ENCODE measurements at regions of chr19 and their contacts with region 1.

Region 1: GRCh38 chr19:55605207-55605636 is 225 bp upstream of the ZNF865 start:
- DNase-seq: peak; percentile 97
- ATAC-seq: peak; percentile 76
- H3K4me3 ChIP-seq: peak overlapping the region; percentile 43 to 84 (median 70)
- H3K4me3 Mint-ChIP-seq: peak overlapping the region; percentile 86
- H3K27ac ChIP-seq: peak overlapping the region; percentile 74 to 85
- H3K27ac Mint-ChIP-seq: peak overlapping the region; percentile 94
- H3K4me1 ChIP-seq: peaks cover 17 to 35% of the 10 kb centered on the region in 2 donors
- H3K4me1 Mint-ChIP-seq: peaks cover 56% of the 10 kb centered on the region
- H3K27me3 ChIP-seq: no peaks in the 10 kb centered on the region
- H3K27me3 Mint-ChIP-seq: no peaks in the 10 kb centered on the region
- CTCF ChIP-seq: no peak

Region 2: DNA sequence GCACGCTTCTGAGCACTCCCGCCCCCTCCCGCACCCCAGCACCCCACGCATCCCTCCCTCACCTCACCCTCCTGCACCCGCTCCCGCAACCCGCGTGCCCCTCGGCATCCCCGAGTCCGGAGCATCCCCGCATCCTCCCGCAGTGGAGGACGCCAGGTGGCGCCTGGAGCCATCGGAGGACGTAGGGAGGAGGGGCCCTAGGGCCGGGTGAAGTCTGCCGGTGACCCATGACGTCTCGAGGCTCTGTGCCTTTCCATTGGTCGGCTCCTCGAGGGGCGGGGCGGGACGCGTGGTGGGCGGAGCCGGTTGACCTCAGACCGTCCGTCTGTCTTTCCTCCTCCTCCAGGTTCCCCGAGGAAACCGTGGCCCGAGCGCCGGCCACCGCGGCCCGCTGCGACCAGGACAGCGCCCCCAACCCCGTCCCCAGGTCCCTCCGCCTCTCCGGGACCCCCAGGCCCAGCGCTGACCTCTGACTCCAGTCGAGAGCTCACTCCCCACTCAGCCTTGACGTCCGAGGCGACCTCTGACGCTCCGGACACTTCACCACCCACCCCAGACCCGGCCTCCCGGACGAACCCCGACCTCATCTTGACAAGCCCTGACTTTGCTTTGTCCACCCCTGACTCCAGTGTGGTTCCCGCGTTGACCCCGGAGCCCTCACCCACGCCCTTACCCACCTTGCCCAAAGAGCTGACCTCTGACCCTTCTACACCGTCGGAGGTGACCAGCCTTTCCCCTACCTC is 88.2 kb before region 1 on chr19:
- CTCF ChIA-PET with region 1: interaction called, 46 read pairs
- POLR2A ChIA-PET with region 1: interaction called, 3 read pairs
- intact Hi-C with region 1: no loop called
- DNase-seq: peak; percentile 94
- ATAC-seq: peak; percentile 100
- H3K4me3 ChIP-seq: peak overlapping the region in 4 of 5 experiments; percentile 53 to 60 (median 58)
- H3K4me3 Mint-ChIP-seq: peak overlapping the region; percentile 88
- H3K27ac ChIP-seq: peak overlapping the region; percentile 91 to 93
- H3K27ac Mint-ChIP-seq: peak overlapping the region; percentile 84
- H3K4me1 ChIP-seq: peaks cover 4 to 11% of the 10 kb centered on the region in 2 donors
- H3K4me1 Mint-ChIP-seq: peaks cover 9% of the 10 kb centered on the region
- H3K27me3 ChIP-seq: peaks cover 0 to 8% (median 0%) of the 10 kb centered on the region in 4 experiments
- H3K27me3 Mint-ChIP-seq: peaks cover 8% of the 10 kb centered on the region
- CTCF ChIP-seq: peak; percentile 81

Region 3: GRCh38 chr19:55586976-55587668 is 18.1 kb before region 1 on chr19:
- CTCF ChIA-PET with region 1: interaction called, 8 read pairs
- POLR2A ChIA-PET with region 1: interaction called, 12 read pairs
- intact Hi-C with region 1: loop called (anchors 2 kb)
- DNase-seq: peak; percentile 93
- ATAC-seq: peak; percentile 94
- H3K4me3 ChIP-seq: peak overlapping the region; percentile 33 to 59 (median 41)
- H3K4me3 Mint-ChIP-seq: peak overlapping the region; percentile 90
- H3K27ac ChIP-seq: no peak overlapping the region
- H3K27ac Mint-ChIP-seq: peak overlapping the region; percentile 84
- H3K4me1 ChIP-seq: peaks cover 24 to 27% of the 10 kb centered on the region in 2 donors
- H3K4me1 Mint-ChIP-seq: peaks cover 26% of the 10 kb centered on the region
- H3K27me3 ChIP-seq: no peaks in the 10 kb centered on the region
- H3K27me3 Mint-ChIP-seq: no peaks in the 10 kb centered on the region
- CTCF ChIP-seq: no peak

Region 4: DNA sequence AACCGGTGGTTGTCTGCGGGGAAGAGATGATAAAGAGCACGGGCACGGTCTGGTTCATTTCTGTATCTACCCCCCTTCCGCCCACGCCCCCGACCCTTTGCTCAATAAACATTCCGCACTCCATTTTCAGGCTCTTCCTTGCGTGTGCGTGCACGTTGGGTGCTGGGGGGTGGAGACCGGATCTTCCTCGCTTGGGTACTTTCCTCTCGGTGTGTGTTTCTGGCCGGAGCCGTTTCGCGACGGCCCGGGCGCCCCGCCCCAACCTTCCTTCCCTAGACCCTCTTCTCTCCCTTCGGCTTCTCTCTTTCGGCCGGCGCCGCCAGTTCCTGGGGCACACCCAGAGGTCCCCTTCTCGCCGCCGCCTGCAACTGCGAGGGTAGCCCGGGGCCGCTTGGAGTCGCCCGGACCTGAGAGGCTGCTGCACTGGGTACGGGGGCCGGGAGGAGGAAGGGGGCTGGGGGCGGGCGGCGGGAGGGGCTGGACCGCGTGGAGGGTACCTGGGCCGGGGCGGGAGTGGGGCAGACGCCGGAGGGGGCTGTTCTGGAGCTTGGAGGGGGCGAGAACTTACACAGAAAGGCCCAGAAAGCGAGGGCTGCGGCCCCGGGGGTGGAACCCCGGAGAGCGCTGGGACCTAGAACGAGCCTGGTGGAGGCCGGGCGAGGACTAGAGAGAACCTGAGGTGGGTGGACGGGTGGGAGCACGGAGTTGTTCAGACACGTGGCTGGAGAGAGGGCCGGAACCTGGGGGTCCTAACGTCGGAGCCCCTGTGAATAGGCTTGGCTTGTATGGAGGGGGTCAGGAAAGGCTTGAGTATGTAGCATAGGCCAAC is 38.3 kb after region 1 on chr19 and contains the start of gene ZNF581:
- CTCF ChIA-PET with region 1: interaction called, 6 read pairs
- POLR2A ChIA-PET with region 1: interaction called, 5 read pairs
- intact Hi-C with region 1: loop called (anchors 5 kb)
- DNase-seq: peak; percentile 90
- ATAC-seq: peak; percentile 36
- H3K4me3 ChIP-seq: peak within 1 kb of the TSS; percentile 59 to 85 (median 78)
- H3K4me3 Mint-ChIP-seq: peak within 1 kb of the TSS; percentile 88
- H3K27ac ChIP-seq: peak within 1 kb of the TSS; percentile 79 to 82
- H3K27ac Mint-ChIP-seq: peak within 1 kb of the TSS; percentile 98
- H3K4me1 ChIP-seq: peaks cover 32 to 68% of the 10 kb centered on the region in 2 donors
- H3K4me1 Mint-ChIP-seq: peaks cover 60% of the 10 kb centered on the region
- H3K27me3 ChIP-seq: no peaks in the 10 kb centered on the region
- H3K27me3 Mint-ChIP-seq: no peaks in the 10 kb centered on the region
- CTCF ChIP-seq: no peak
- total RNA-seq, gene ZNF581: 47.3 and 51.3 TPM in 2 replicates

Region 5: GRCh38 chr19:55653758-55654539 is 48.7 kb after region 1 on chr19:
- CTCF ChIA-PET with region 1: interaction called, 3 read pairs
- POLR2A ChIA-PET with region 1: interaction called, 4 read pairs
- intact Hi-C with region 1: loop called (anchors 1 kb)
- DNase-seq: peak; percentile 100
- ATAC-seq: peak; percentile 77
- H3K4me3 ChIP-seq: peak overlapping the region; percentile 66 to 98 (median 92)
- H3K4me3 Mint-ChIP-seq: peak overlapping the region; percentile 93
- H3K27ac ChIP-seq: peak overlapping the region; percentile 98 to 100
- H3K27ac Mint-ChIP-seq: peak overlapping the region; percentile 96
- H3K4me1 ChIP-seq: peaks cover 41 to 53% of the 10 kb centered on the region in 2 donors
- H3K4me1 Mint-ChIP-seq: peaks cover 56% of the 10 kb centered on the region
- H3K27me3 ChIP-seq: no peaks in the 10 kb centered on the region
- H3K27me3 Mint-ChIP-seq: no peaks in the 10 kb centered on the region
- CTCF ChIP-seq: peak; percentile 100

Measured in B cell (primary cell).